Right ventricle myocardium inferior (tissue), 1 donor: ENCODE measurements at regions of chr13 and their contacts with region 1.

Region 1: GRCh38 chr13:67090856-67091255 is 139.3 kb downstream of the PCDH9 start:
- DNase-seq: no peak
- ATAC-seq: no peak

Region 2: DNA sequence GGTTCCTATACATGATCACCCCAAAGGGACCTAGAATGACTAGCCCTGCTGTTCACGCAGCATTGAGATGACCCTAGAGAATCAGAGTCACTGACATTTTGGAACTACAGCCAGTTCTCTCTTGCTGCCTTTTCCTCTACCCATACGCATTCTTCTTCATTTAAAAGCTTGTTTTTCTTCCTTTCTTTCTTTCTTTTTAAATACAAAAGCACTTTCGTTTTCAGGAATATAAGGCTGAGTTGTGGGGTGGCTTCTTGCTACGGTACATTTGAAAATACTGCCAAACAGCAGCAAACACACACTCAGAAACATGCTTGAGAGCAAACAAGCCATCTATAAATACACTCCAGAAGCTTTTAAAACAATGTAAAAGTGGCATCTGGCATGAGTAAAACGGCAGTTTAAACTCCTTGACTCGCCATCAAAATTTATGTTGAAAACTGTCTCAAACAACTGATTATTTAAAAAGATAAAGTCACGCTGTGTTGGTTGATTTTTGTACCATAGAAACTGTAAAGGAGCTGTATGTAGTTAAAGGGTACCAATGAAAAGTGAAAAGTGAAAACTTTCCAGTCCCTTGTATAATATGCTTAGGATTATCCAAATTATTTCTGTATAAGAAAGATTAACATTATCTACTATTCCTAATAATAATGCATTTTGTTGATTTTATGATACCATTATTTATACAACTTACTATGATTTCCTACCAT is 43.7 kb after region 1 on chr13:
- intact Hi-C with region 1: loop called (anchors 5 kb)
- DNase-seq: no peak
- ATAC-seq: peak; percentile 56

Region 3: GRCh38 chr13:67147342-67148133 is 56.7 kb after region 1 on chr13:
- intact Hi-C with region 1: loop called (anchors 5 kb)
- DNase-seq: no peak
- ATAC-seq: peak; percentile 89